ENCODE measurements at regions of chr9 and their contacts with region 1.

Region 1: GRCh38 chr9:71025201-71025600 is 96.2 kb downstream of the TRPM3 start:
- DNase-seq: no peak
- H3K4me3 ChIP-seq: no peak overlapping the region
- H3K27ac ChIP-seq: no peak overlapping the region
- H3K4me1 ChIP-seq: no peaks in the 10 kb centered on the region
- H3K27me3 ChIP-seq: no peaks in the 10 kb centered on the region
- CTCF ChIP-seq: no peak
- EP300 ChIP-seq: no peak
- POLR2A ChIP-seq: no peak

Region 2: GRCh38 chr9:71010258-71010657 is 14.9 kb before region 1 on chr9:
- intact Hi-C with region 1: loop called in 1 of 4 experiments (anchors 2 kb)
- DNase-seq: no peak
- H3K4me3 ChIP-seq: no peak overlapping the region
- H3K27ac ChIP-seq: no peak overlapping the region
- H3K4me1 ChIP-seq: no peaks in the 10 kb centered on the region
- H3K27me3 ChIP-seq: no peaks in the 10 kb centered on the region
- CTCF ChIP-seq: no peak
- EP300 ChIP-seq: no peak
- POLR2A ChIP-seq: no peak

Region 3: DNA sequence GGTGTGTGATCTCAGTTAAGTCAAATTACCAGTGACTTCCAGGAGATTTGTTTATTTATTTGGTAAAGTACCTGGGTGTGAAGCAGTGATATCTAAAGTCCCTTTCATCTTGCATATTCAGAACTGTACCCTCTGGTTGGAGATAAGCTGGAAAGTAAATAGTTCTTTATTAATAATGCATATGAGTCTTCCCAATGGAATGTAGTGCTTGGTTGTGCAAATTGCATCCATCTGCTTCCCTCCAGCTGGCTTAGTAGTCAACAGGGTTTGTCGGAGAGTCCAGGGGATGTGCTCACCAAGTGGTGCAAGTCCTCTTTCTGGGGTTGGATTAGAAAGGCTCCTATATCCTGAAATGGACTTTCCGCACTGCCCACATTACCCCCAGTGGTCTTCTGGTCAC is 54.2 kb after region 1 on chr9:
- intact Hi-C with region 1: loop called in 1 of 4 experiments (anchors 10 kb)
- DNase-seq: no peak
- H3K4me3 ChIP-seq: no peak overlapping the region
- H3K27ac ChIP-seq: no peak overlapping the region
- H3K4me1 ChIP-seq: no peaks in the 10 kb centered on the region
- H3K27me3 ChIP-seq: no peaks in the 10 kb centered on the region
- CTCF ChIP-seq: no peak
- EP300 ChIP-seq: no peak
- POLR2A ChIP-seq: no peak

Region 4: GRCh38 chr9:71115448-71115975 is 90.3 kb after region 1 on chr9:
- intact Hi-C with region 1: no loop called
- DNase-seq: no peak
- H3K4me3 ChIP-seq: no peak overlapping the region
- H3K27ac ChIP-seq: no peak overlapping the region
- H3K4me1 ChIP-seq: no peaks in the 10 kb centered on the region
- H3K27me3 ChIP-seq: no peaks in the 10 kb centered on the region
- CTCF ChIP-seq: no peak
- EP300 ChIP-seq: no peak
- POLR2A ChIP-seq: no peak